ENCODE measurements at regions of chr15 and their contacts with region 1.

Region 1: DNA sequence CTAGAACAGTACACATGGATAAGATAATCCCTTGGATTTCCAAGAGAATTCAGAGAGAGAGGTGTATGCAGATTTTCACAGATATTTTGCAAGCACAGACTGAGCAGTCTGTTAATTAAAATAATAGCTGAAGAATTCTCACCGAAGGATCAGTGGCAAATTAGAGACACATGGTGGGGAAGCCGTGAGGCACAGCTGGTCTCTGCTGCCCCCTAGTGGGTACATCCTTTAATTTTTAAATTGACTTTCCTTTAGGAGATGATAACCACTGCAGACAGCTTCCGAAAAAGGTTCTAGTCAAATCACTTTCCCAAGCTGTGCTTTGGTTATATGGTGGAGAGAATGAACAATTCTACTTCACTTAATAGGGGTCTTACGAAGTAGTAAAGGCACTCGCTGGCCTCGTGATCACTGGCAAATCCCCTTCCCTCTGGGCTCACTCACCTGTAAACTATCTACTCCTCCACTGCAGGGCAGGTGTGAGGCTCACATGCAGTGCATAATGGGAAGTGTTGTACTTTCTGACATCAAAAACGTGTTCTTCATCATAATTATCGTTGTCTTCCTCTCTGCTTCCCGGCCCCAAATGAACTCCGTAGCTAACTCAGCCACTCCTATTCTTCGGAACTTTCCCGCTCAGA is 19.5 kb downstream of the MESD start:
- DNase-seq: peak in 1 of 2 experiments; percentile 78
- H3K4me3 ChIP-seq: no peak overlapping the region
- H3K27ac ChIP-seq: no peak overlapping the region
- H3K4me1 ChIP-seq: peaks cover 13 to 30% (median 21%) of the 10 kb centered on the region in 4 experiments
- H3K27me3 ChIP-seq: no peaks in the 10 kb centered on the region
- CTCF ChIP-seq: peak; percentile 66 to 74 (median 71)
- EP300 ChIP-seq: no peak
- POLR2A ChIP-seq: no peak
- RAD21 ChIP-seq: peak; percentile 91 to 92

Region 2: GRCh38 chr15:80783260-80783659 is 186.9 kb before region 1 on chr15:
- CTCF ChIA-PET with region 1: interaction called, 94 read pairs
- POLR2A ChIA-PET with region 1: no interaction called
- DNase-seq: no peak
- H3K4me3 ChIP-seq: no peak overlapping the region
- H3K27ac ChIP-seq: no peak overlapping the region
- H3K4me1 ChIP-seq: peaks cover 0 to 7% (median 4%) of the 10 kb centered on the region in 4 experiments; a peak in 5 of 7 replicates
- H3K27me3 ChIP-seq: peaks cover 4 to 32% (median 23%) of the 10 kb centered on the region in 4 experiments
- CTCF ChIP-seq: no peak
- EP300 ChIP-seq: no peak
- POLR2A ChIP-seq: no peak
- RAD21 ChIP-seq: no peak

Region 3: GRCh38 chr15:80835338-80835737 is 134.8 kb before region 1 on chr15:
- CTCF ChIA-PET with region 1: interaction called, 10 read pairs
- POLR2A ChIA-PET with region 1: interaction called, 4 read pairs
- DNase-seq: peak in 1 of 2 experiments; percentile 63
- H3K4me3 ChIP-seq: no peak overlapping the region
- H3K27ac ChIP-seq: no peak overlapping the region
- H3K4me1 ChIP-seq: peaks cover 2 to 15% (median 9%) of the 10 kb centered on the region in 4 experiments
- H3K27me3 ChIP-seq: no peaks in the 10 kb centered on the region
- CTCF ChIP-seq: peak; percentile 32 to 62 (median 47)
- EP300 ChIP-seq: no peak
- POLR2A ChIP-seq: no peak
- RAD21 ChIP-seq: peak; percentile 50 to 57; a peak in 3 of 4 replicates

Region 4: DNA sequence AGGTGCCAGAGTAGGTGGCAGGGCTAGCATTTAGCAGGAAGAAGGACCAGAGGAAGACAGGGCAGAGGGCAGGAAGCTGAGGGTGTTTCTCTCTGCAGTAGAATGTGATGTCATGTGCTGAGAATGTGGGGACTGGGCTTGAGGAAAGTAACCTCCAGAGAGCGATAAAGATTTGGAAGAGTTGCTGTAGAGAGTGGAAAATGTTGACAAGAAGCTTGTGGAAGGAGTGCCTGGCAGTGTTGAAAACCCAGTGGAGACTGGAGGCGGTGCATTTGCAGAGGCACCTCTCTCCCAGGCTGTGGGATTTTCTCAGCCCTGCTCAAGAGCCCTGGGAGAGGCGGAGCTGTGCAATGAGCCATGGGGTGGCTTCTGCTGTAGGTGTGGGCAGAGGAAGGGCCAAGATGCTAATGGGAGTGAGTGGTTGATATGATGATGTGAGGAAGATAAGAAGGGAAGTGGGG is 35.3 kb before region 1 on chr15:
- CTCF ChIA-PET with region 1: interaction called, 16 read pairs
- POLR2A ChIA-PET with region 1: no interaction called
- DNase-seq: no peak
- H3K4me3 ChIP-seq: no peak overlapping the region
- H3K27ac ChIP-seq: no peak overlapping the region
- H3K4me1 ChIP-seq: peaks cover 0 to 2% (median 0%) of the 10 kb centered on the region in 4 experiments; a peak in 1 of 7 replicates
- H3K27me3 ChIP-seq: no peaks in the 10 kb centered on the region
- CTCF ChIP-seq: no peak
- EP300 ChIP-seq: no peak
- POLR2A ChIP-seq: no peak
- RAD21 ChIP-seq: 0 out of 4 replicates have a peak, but pooled peaks of 1 of the 2 experiments have one; percentile 3

Region 5: DNA sequence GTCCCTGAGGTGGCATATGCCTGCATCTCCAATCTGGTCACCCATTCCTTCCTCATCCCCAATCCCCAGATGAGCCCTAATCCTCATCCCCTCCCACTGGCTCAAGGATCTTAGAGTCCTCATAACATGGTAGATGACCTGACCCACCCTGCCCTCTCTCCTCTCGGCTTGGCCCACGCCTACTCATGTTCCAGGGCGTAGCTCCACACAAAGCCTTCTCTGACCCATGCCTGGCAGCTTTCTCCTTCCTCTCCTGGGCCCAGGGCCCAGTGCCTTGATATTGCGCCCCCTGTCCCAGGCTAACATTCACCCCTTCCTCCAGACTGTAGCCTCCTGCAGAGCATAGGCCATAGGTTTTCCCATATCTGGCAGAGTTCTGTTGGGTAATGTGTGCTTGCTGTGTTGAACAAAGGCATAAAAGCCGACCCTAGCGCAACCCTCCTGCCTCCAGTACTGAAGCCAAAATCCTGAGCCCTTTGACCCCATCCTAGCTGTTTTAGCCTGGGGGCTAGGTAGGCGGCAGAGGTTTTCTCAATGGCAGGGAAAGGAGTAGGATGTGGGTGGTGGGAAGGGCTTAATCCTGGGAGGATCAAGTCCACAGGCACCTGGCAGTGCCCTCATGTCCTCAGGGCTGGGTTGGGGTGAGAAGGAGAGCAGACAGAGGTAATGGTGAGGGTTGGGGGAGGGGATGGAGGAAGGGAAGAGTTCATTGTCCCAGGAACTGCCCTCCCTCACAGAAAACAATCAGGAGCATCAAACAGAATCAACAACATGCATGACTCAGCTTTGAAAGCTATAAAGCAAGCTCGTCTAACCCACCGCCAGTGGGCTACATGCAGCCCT is 16.0 kb before region 1 on chr15:
- CTCF ChIA-PET with region 1: interaction called, 71 read pairs
- POLR2A ChIA-PET with region 1: interaction called, 5 read pairs
- DNase-seq: peak in 1 of 2 experiments; percentile 51
- H3K4me3 ChIP-seq: no peak overlapping the region; a peak in 1 of 8 replicates
- H3K27ac ChIP-seq: no peak overlapping the region; the same call in 1 of the 2 replicates
- H3K4me1 ChIP-seq: peaks cover 0 to 16% (median 6%) of the 10 kb centered on the region in 4 experiments; a peak in 5 of 7 replicates
- H3K27me3 ChIP-seq: no peaks in the 10 kb centered on the region
- CTCF ChIP-seq: no peak
- EP300 ChIP-seq: no peak
- POLR2A ChIP-seq: no peak
- RAD21 ChIP-seq: no peak

Region 6: GRCh38 chr15:81146006-81146405 is 175.9 kb after region 1 on chr15:
- CTCF ChIA-PET with region 1: no interaction called
- POLR2A ChIA-PET with region 1: no interaction called
- DNase-seq: no peak
- H3K4me3 ChIP-seq: no peak overlapping the region
- H3K27ac ChIP-seq: no peak overlapping the region
- H3K4me1 ChIP-seq: no peaks in the 10 kb centered on the region
- H3K27me3 ChIP-seq: no peaks in the 10 kb centered on the region
- CTCF ChIP-seq: no peak
- EP300 ChIP-seq: no peak
- POLR2A ChIP-seq: no peak
- RAD21 ChIP-seq: no peak

Region 7: DNA sequence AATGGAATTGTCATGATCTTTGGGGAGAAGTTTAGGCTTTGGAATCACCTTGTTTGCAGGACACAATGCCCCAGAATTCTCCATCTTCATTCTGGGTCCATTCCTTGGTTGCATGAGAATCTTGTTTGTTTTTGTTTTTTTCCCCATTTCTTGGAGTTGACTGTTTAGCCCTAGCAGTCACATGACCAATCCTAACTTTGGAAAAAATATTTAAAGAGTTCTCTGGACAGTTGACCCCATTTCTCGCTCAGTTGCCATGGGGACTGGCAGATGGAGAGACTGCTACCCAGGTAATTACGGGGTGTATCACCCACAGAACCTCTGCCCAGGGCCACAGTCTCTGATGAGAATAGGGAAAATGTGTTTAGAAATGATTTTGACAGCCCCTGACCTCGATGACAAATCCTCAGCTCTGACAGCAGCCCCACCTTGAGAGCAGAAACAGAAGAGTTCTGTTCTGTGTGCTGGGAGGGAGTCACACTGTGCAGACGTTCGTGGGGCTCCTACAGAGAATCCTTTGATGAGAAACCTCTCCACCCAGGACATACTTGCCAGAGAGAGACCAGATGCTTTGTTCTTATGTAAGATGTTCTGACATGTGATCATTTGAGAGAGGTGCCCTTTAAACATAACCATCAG is 284.3 kb after region 1 on chr15:
- CTCF ChIA-PET with region 1: no interaction called
- POLR2A ChIA-PET with region 1: no interaction called
- DNase-seq: no peak
- H3K4me3 ChIP-seq: no peak overlapping the region
- H3K27ac ChIP-seq: no peak overlapping the region
- H3K4me1 ChIP-seq: no peaks in the 10 kb centered on the region
- H3K27me3 ChIP-seq: no peaks in the 10 kb centered on the region
- CTCF ChIP-seq: no peak
- EP300 ChIP-seq: no peak
- POLR2A ChIP-seq: no peak
- RAD21 ChIP-seq: no peak